Activated naive CD4-positive, alpha-beta T cell treated with anti-CD3 and anti-CD28 coated beads for 36 hours (primary cell): ENCODE measurements at regions of chr16 and their contacts with region 1.

Region 1: GRCh38 chr16:27253526-27253930 is 15.0 kb downstream of the NSMCE1 start:
- DNase-seq: no peak
- H3K4me3 Mint-ChIP-seq: peak overlapping the region; percentile 44
- H3K27ac Mint-ChIP-seq: peak overlapping the region; percentile 92
- H3K4me1 Mint-ChIP-seq: peaks cover 91% of the 10 kb centered on the region
- H3K27me3 Mint-ChIP-seq: no peaks in the 10 kb centered on the region

Region 2: DNA sequence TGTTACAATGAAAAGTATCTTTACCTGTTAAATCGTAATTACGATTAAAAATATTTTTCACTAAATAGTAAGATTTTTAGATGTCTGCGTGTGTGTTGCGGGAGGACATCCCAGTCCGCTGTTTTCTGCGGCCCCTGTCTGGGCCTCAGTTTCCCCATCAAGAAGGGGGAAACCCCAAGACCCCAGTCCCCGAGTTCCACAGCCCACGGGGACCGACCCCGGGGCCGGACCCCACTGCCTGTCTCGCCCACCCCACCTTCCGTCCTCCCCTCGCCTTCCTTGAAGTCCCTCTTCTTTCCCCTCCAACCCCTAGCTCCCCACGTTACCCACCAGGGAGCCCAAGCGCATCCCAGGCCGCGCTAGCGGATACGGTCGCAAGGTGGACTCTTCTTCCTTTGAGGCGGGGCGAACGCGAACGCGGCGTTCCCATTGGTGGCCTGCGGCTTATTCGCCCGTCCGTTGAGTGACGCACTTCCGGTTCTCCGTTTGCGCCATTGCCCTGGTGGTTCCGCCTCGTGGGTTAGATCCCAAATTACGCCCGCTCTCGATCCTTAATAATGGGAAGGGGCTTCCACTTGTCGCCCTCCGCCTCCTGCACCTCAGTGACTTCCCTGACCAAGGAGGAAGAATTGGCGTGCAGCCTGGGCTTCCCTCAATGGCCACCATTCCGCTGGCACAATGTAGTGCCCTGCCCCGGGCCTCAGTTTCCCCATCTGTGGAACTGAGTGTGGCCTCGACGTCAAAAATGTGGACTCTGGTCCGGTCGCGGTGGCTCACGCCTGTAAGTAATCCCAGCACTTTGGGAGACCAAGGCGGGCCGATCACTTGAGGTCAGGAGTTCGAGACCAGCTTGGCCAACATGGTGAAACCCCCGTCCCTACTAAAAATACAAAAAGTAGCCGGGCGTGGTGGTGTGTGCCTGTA is 15.1 kb after region 1 on chr16 and contains the start of gene NSMCE1:
- CTCF ChIA-PET with region 1: interaction called, 4 read pairs
- intact Hi-C with region 1: loop called (anchors 1 kb)
- DNase-seq: peak; percentile 99
- H3K4me3 Mint-ChIP-seq: peak within 1 kb of the TSS; percentile 96
- H3K27ac Mint-ChIP-seq: peak within 1 kb of the TSS; percentile 96
- H3K4me1 Mint-ChIP-seq: peaks cover 67% of the 10 kb centered on the region
- H3K27me3 Mint-ChIP-seq: no peaks in the 10 kb centered on the region
- total RNA-seq, gene NSMCE1: 112 to 117 TPM

Region 3: GRCh38 chr16:27286451-27286850 is 32.9 kb after region 1 on chr16:
- CTCF ChIA-PET with region 1: no interaction called
- intact Hi-C with region 1: loop called (anchors 1 kb)
- DNase-seq: no peak
- H3K4me3 Mint-ChIP-seq: no peak overlapping the region
- H3K27ac Mint-ChIP-seq: no peak overlapping the region
- H3K4me1 Mint-ChIP-seq: peaks cover 72% of the 10 kb centered on the region
- H3K27me3 Mint-ChIP-seq: peaks cover 8% of the 10 kb centered on the region

Region 4: GRCh38 chr16:28181515-28181914 is 928.0 kb after region 1 on chr16:
- CTCF ChIA-PET with region 1: no interaction called
- intact Hi-C with region 1: loop called (anchors 10 kb)
- DNase-seq: no peak
- H3K4me3 Mint-ChIP-seq: no peak overlapping the region
- H3K27ac Mint-ChIP-seq: peak overlapping the region; percentile 91
- H3K4me1 Mint-ChIP-seq: peaks cover 80% of the 10 kb centered on the region
- H3K27me3 Mint-ChIP-seq: no peaks in the 10 kb centered on the region